ENCODE measurements at regions of chr6 and their contacts with region 1.

Region 1: DNA sequence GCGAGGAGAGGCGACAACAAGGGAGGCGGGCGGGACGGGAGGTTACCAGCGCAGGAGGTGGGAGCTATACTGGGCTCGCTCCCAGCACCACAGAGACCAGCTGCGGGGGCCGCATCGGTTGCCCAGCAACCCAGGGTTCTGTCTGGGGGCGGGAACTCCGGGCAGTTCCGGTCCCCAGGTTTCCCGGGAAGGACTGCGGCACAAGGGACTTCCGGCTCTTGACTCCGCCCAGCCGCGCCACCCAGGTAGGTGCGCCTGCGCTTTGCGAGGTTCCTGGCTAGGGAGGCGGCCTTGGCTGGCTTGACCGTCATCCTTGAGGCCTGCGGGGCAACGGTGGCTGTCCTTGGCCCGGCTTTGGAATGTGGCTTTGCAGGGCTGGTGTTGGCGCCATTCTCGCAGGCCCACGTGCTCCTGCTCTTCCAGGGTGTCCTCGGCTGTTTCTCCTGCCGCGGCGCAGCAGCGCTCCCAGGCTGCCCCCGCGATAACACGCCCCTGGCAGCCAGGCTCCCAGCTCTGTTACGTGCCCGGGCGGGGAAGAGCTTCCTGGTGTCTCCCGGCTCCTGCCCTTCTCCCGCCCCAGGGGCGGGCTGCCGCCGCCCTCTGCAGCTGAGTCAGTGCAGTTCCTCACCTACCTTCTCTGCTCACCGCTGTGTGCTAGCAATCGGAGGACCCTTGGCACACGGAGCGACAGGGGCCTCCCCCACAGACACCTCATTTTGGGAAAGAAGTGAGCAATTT is at the start of gene RSPH3:
- DNase-seq: peak; percentile 96 to 97
- H3K4me3 ChIP-seq: peak within 1 kb of the TSS; percentile 79 to 84 (median 81)
- H3K27ac ChIP-seq: peak within 1 kb of the TSS; percentile 87 to 88
- H3K4me1 ChIP-seq: no peaks in the 10 kb centered on the region
- H3K27me3 ChIP-seq: no peaks in the 10 kb centered on the region
- CTCF ChIP-seq: peak in 1 of 3 donors; percentile 14
- POLR2A ChIP-seq: no peak
- total RNA-seq, gene RSPH3: 9.4 to 14.9 (median 9.5) TPM

Region 2: DNA sequence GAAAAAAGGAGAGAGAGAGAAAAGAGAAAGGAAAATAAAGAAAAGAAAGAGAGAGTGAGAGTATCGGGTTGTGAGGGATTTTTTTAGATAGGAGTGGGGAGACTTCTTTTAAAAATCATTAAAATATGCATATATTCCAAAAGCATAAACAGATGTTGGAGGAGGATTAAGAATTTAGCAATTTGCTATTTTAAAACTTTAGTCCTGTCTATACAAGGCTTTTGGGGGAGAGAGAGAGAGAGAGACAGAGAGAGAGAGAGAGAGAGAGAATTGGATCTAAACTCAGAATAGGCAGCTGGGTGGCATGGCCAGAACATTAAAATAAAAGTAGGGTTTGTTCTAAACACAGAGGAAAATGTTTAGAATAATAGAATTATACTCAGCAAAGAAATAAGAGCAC is 621.1 kb after region 1 on chr6:
- intact Hi-C with region 1: loop called (anchors 5 kb)
- DNase-seq: no peak
- H3K4me3 ChIP-seq: no peak overlapping the region
- H3K27ac ChIP-seq: no peak overlapping the region
- H3K4me1 ChIP-seq: no peaks in the 10 kb centered on the region
- H3K27me3 ChIP-seq: no peaks in the 10 kb centered on the region
- CTCF ChIP-seq: no peak
- POLR2A ChIP-seq: no peak

Measured in breast epithelium (tissue), 4 donors.